Thyroid gland (tissue), 4 donors: ENCODE measurements at regions of chr3 and their contacts with region 1.

Region 1: DNA sequence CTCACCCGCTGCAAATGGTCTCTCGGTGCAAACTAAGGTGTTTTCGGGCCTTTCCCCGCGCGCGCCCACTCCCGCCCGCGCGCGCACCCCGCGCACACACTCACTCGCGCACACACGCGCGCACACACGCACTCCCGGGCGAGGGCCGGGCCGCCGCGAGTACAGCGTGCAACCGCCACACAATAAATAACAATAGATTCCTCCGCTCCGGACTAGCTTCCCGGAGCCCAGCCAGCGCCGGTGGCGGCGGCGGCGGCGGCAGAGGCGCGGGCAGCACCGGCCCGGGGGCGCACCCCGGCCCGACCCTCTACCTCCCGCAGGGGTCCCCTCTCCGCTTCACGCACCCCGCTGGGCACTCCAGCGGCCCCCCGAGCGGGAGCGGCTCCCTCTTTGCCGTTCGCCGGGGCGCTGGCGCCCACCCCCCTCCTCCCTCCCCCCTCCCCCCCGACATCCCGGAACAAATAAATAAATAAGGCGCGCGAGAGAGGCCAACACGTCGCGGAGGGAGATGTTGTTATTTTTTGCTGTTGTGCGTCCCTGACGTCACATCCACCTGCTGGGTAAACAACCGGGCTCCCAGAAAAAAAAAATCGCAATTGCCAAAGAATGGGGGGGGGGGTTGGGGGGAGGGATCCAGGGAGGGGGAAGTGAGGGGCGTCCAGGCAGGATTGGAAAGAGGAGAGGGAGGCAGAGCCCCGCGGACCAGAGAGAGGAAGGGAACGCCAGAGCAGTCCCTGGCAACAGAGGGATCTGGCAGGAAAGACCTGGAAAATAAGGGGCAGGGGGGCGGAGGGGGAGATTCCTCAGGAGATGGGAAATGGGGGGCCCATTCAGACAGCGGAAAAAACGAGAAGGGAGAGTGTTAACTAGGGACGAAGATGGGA is at the start of gene FOXP1:
- DNase-seq: peak; percentile 77 to 78
- H3K4me3 ChIP-seq: peak within 1 kb of the TSS; percentile 45 to 86 (median 84)
- H3K27ac ChIP-seq: peak within 1 kb of the TSS; percentile 93 to 98 (median 97)
- H3K4me1 ChIP-seq: peaks cover 16% of the 10 kb centered on the region in 2 donors
- H3K27me3 ChIP-seq: no peaks in the 10 kb centered on the region
- CTCF ChIP-seq: no peak
- POLR2A ChIP-seq: peak in 1 of 2 donors; percentile 67
- total RNA-seq, gene FOXP1: 111 to 187 (median 141) TPM

Region 2: GRCh38 chr3:70550723-70551319 is 1033.0 kb before region 1 on chr3:
- intact Hi-C with region 1: loop called (anchors 10 kb)
- DNase-seq: peak; percentile 64 to 75
- H3K4me3 ChIP-seq: no peak overlapping the region
- H3K27ac ChIP-seq: no peak overlapping the region
- H3K4me1 ChIP-seq: no peaks in the 10 kb centered on the region
- H3K27me3 ChIP-seq: no peaks in the 10 kb centered on the region
- CTCF ChIP-seq: peak; percentile 50 to 78 (median 61)
- POLR2A ChIP-seq: no peak

Region 3: DNA sequence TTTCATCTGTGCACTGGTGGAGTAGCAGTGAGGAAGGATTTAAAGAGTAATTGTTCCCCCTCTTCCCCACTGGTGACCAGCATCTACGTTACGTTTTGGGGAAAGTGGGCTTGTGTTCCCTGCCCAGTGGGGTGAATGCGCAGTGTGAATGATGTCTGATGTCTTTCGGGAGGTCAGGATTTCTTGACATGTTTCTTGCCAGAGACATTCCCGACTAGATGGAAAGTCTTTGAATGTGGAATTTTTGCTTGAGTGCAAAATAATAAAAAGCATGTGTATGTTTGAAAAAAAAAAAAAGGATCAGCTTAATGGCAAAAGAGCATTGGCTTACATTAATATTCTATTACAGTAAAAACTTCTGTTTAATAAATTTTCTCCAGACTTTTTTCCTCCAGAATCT is 632.5 kb before region 1 on chr3:
- intact Hi-C with region 1: no loop called
- DNase-seq: no peak
- H3K4me3 ChIP-seq: no peak overlapping the region
- H3K27ac ChIP-seq: no peak overlapping the region
- H3K4me1 ChIP-seq: no peaks in the 10 kb centered on the region
- H3K27me3 ChIP-seq: no peaks in the 10 kb centered on the region
- CTCF ChIP-seq: no peak
- POLR2A ChIP-seq: no peak

Region 4: DNA sequence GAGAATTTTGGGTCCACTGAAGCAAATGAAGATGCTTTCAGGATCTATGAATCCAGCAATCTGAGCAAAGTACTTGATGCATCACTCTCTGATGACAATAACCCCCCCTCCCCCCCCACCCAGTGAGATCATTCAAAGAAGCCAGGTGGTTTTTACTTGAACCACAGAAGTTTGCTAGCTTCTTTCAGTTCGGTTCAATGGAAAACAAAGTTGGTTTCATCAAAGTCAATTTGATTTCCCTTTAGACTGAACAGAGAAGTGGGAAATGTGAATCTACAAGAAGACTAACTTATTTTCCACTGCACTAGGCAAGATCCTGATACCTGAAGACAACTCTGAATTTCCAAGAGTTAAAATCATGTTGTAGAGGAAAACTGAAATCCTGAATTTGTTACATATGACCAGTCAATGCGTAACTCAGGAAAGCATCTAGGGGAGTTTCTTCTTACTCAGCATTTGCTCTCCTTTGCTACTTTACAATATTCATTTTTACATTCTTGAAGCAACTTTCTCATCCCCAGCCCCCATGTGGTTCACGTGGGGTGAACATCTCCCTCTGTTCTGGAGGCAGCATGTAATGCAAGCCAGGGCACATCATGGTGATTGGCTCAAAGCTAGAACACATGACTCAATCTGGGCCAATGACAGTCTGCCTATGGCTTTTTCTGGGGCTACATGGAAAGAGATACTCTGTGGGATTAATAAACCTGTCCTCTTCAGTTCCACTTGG is 572.9 kb before region 1 on chr3:
- intact Hi-C with region 1: loop called (anchors 10 kb)
- DNase-seq: no peak
- H3K4me3 ChIP-seq: no peak overlapping the region
- H3K27ac ChIP-seq: peak overlapping the region in 1 of 3 donors; percentile 11
- H3K4me1 ChIP-seq: peaks cover 39% of the 10 kb centered on the region in 2 donors
- H3K27me3 ChIP-seq: no peaks in the 10 kb centered on the region
- CTCF ChIP-seq: no peak
- POLR2A ChIP-seq: no peak

Region 5: GRCh38 chr3:71430941-71431552 is 152.8 kb before region 1 on chr3:
- intact Hi-C with region 1: loop called (anchors 10 kb)
- DNase-seq: no peak
- H3K4me3 ChIP-seq: no peak overlapping the region
- H3K27ac ChIP-seq: peak overlapping the region in 2 of 3 donors; percentile 49 to 65
- H3K4me1 ChIP-seq: peaks cover 60 to 69% of the 10 kb centered on the region in 2 donors
- H3K27me3 ChIP-seq: no peaks in the 10 kb centered on the region
- CTCF ChIP-seq: no peak
- POLR2A ChIP-seq: no peak

Region 6: DNA sequence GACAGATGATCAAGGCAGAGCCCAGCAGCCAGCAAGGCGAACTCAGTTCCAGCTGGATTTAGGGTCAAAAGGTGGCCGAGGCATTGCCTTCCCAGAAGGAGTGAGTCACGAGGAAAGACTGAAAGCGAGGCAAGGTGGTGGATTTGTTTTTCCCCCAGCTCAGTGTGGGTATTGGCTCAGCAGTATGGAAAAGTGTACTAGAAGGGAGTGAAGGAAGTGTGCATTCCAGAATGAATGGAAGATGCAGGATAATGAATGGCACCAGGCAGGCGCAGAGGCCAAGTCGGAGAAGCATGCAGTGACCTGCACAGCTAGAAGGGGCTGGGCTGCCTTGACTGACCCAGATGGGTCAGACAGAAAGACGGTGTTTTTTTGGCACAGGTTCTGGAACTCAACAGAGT is 46.6 kb before region 1 on chr3:
- intact Hi-C with region 1: no loop called
- DNase-seq: no peak
- H3K4me3 ChIP-seq: no peak overlapping the region
- H3K27ac ChIP-seq: no peak overlapping the region
- H3K4me1 ChIP-seq: peaks cover 0 to 4% of the 10 kb centered on the region in 2 donors
- H3K27me3 ChIP-seq: no peaks in the 10 kb centered on the region
- CTCF ChIP-seq: no peak
- POLR2A ChIP-seq: no peak

Region 7: GRCh38 chr3:71641674-71642073 is 57.9 kb after region 1 on chr3:
- intact Hi-C with region 1: no loop called
- DNase-seq: no peak
- H3K4me3 ChIP-seq: no peak overlapping the region
- H3K27ac ChIP-seq: no peak overlapping the region
- H3K4me1 ChIP-seq: no peaks in the 10 kb centered on the region
- H3K27me3 ChIP-seq: no peaks in the 10 kb centered on the region
- CTCF ChIP-seq: no peak
- POLR2A ChIP-seq: no peak

Region 8: GRCh38 chr3:71673486-71673885 is 89.7 kb after region 1 on chr3:
- intact Hi-C with region 1: no loop called
- DNase-seq: no peak
- H3K4me3 ChIP-seq: no peak overlapping the region
- H3K27ac ChIP-seq: no peak overlapping the region
- H3K4me1 ChIP-seq: no peaks in the 10 kb centered on the region
- H3K27me3 ChIP-seq: no peaks in the 10 kb centered on the region
- CTCF ChIP-seq: no peak
- POLR2A ChIP-seq: no peak